ENCODE measurements at regions of chr14 and their contacts with region 1.

Region 1: DNA sequence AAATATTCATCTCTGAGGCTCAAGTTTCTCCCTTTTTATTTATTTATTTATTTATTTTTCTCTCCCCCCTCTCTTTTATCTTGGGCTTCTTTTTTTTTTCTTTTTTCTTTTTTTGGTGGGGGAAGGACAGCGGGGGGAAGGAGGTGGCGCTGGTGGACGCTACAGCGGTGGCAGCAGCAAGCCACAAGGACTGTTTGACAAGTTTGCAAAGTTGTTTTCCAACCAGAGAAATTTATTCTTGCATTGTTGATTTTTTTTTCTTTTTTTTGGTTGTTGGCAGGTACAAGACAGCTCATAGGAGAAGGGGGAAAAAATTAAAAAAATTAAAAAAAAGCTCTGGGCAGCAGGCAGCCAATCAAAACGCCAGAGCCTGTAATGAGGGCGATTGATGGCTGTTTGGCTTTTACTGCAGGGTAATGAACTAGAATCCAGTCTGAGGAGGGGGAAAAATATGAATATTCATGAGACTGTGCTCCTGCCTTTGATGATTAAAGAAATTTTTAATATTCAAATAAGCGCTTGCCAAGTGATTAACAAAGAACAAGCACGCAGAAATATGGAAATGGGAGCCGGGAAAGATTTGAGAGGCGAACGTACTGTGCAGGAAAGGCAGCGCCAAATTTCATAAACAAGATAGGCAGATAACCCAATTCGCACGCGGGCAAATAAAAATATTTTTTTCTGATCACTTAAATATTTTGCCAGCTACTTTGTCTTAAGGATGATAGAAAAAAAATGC is 36.2 kb downstream of the BCL11B start:
- DNase-seq: no peak
- H3K4me3 Mint-ChIP-seq: peak overlapping the region; percentile 74
- H3K27ac Mint-ChIP-seq: peak overlapping the region; percentile 93
- H3K4me1 Mint-ChIP-seq: peaks cover 93% of the 10 kb centered on the region
- H3K27me3 Mint-ChIP-seq: no peaks in the 10 kb centered on the region

Region 2: GRCh38 chr14:99224116-99224910 is 11.4 kb before region 1 on chr14:
- CTCF ChIA-PET with region 1: interaction called, 21 read pairs
- intact Hi-C with region 1: loop called (anchors 1 kb)
- DNase-seq: no peak
- H3K4me3 Mint-ChIP-seq: peak overlapping the region; percentile 41
- H3K27ac Mint-ChIP-seq: peak overlapping the region; percentile 97
- H3K4me1 Mint-ChIP-seq: peaks cover 95% of the 10 kb centered on the region
- H3K27me3 Mint-ChIP-seq: no peaks in the 10 kb centered on the region